MCF 10A (cell line): ENCODE measurements at regions of chr17 and their contacts with region 1.

Region 1: GRCh38 chr17:28925912-28926365 is 23.1 kb upstream of the DHRS13 start:
- DNase-seq: peak; percentile 88
- H3K4me3 Mint-ChIP-seq: no peak overlapping the region
- H3K27ac Mint-ChIP-seq: peak overlapping the region; percentile 62
- H3K4me1 Mint-ChIP-seq: peaks cover 20% of the 10 kb centered on the region
- H3K27me3 Mint-ChIP-seq: no peaks in the 10 kb centered on the region
- CTCF ChIP-seq: no peak

Region 2: GRCh38 chr17:28908640-28909167 is 17.2 kb before region 1 on chr17:
- CTCF ChIA-PET with region 1: interaction called, 4 read pairs
- POLR2A ChIA-PET with region 1: interaction called, 21 read pairs
- intact Hi-C with region 1: no loop called
- DNase-seq: peak; percentile 68
- H3K4me3 Mint-ChIP-seq: no peak overlapping the region
- H3K27ac Mint-ChIP-seq: peak overlapping the region; percentile 75
- H3K4me1 Mint-ChIP-seq: peaks cover 17% of the 10 kb centered on the region
- H3K27me3 Mint-ChIP-seq: no peaks in the 10 kb centered on the region
- CTCF ChIP-seq: no peak

Region 3: GRCh38 chr17:28937044-28937729 is 11.2 kb after region 1 on chr17:
- CTCF ChIA-PET with region 1: interaction called, 3 read pairs
- POLR2A ChIA-PET with region 1: interaction called, 30 read pairs
- intact Hi-C with region 1: no loop called
- DNase-seq: peak; percentile 79
- H3K4me3 Mint-ChIP-seq: no peak overlapping the region
- H3K27ac Mint-ChIP-seq: peak overlapping the region; percentile 39
- H3K4me1 Mint-ChIP-seq: peaks cover 16% of the 10 kb centered on the region
- H3K27me3 Mint-ChIP-seq: no peaks in the 10 kb centered on the region
- CTCF ChIP-seq: no peak